ENCODE measurements at regions of chr9 and their contacts with region 1.

Region 1: DNA sequence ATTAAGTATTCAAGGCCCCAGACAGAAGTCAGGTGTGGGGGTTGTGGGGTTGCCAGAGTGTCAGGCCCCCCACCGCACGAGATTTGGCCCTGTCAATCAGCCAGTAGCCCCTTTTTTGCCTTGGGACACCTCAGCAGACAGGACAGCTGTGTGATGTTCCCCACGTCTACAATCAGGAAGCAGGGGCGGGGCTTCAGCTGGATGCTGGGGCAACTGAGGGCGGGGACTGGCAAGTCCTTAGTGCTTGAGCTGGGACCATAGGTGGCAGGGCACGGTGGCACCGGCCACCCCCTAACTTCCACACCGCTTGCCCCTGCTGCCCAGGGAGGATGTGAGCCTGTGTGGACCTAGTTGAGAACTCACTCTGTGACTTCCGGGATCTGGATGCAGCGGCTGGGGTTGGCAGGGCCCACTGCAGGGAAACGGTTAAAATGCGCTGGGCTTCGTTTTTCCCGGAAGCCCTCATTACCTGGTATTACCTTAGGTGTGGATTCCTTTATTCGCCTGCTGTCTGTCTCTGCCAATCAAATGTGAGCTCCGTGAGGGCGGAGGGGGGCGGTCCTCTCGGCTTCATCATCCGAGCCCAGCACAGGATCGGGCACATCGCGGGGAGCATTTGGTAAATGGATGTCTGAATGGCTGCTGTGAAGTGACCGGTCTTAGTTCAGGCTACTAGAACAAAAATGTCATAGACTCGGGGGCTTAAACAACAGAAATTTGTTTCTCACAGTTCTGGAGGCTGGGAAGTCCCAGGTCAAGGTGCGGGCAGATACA is 7.5 kb upstream of the GTF3C5 start:
- DNase-seq: no peak
- ATAC-seq: no peak
- H3K4me3 Mint-ChIP-seq: no peak overlapping the region
- H3K27ac Mint-ChIP-seq: no peak overlapping the region
- H3K4me1 Mint-ChIP-seq: peaks cover 7% of the 10 kb centered on the region
- H3K27me3 Mint-ChIP-seq: no peaks in the 10 kb centered on the region
- CTCF ChIP-seq: no peak

Region 2: DNA sequence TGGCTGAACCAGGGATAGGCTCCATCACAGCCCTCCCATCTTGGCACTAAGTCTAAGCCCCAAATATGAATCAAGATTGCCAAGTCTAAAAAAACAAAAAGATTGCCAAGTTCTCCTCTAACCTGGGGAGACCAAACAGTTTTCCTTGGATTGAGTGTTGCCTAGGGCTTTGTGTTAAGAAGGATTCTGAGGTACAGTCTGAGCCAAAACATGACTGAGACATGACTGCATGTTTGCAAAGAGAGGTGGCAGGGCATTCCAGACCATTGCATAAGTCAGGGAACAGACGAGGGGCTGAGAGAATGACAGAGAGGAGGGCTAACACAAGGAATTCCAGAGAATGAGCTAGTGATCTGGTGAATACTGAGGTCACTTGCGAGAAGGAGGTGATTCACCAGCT is 2002.9 kb before region 1 on chr9:
- CTCF ChIA-PET with region 1: no interaction called
- POLR2A ChIA-PET with region 1: no interaction called
- intact Hi-C with region 1: no loop called
- DNase-seq: no peak
- ATAC-seq: no peak
- H3K4me3 Mint-ChIP-seq: no peak overlapping the region
- H3K27ac Mint-ChIP-seq: no peak overlapping the region
- H3K4me1 Mint-ChIP-seq: no peaks in the 10 kb centered on the region
- H3K27me3 Mint-ChIP-seq: peaks cover 12% of the 10 kb centered on the region
- CTCF ChIP-seq: no peak

Region 3: GRCh38 chr9:132752877-132753592 is 270.3 kb before region 1 on chr9:
- CTCF ChIA-PET with region 1: no interaction called
- POLR2A ChIA-PET with region 1: no interaction called
- intact Hi-C with region 1: no loop called
- DNase-seq: no peak
- ATAC-seq: no peak
- H3K4me3 Mint-ChIP-seq: no peak overlapping the region
- H3K27ac Mint-ChIP-seq: no peak overlapping the region
- H3K4me1 Mint-ChIP-seq: no peaks in the 10 kb centered on the region
- H3K27me3 Mint-ChIP-seq: peaks cover 4% of the 10 kb centered on the region
- CTCF ChIP-seq: no peak

Region 4: GRCh38 chr9:132973713-132974112 is 49.6 kb before region 1 on chr9:
- CTCF ChIA-PET with region 1: interaction called, 5 read pairs
- POLR2A ChIA-PET with region 1: no interaction called
- intact Hi-C with region 1: loop called (anchors 2 kb)
- DNase-seq: no peak
- ATAC-seq: no peak
- H3K4me3 Mint-ChIP-seq: no peak overlapping the region
- H3K27ac Mint-ChIP-seq: no peak overlapping the region
- H3K4me1 Mint-ChIP-seq: peaks cover 13% of the 10 kb centered on the region
- H3K27me3 Mint-ChIP-seq: peaks cover 18% of the 10 kb centered on the region
- CTCF ChIP-seq: no peak

Region 5: GRCh38 chr9:133008824-133009223 is 14.5 kb before region 1 on chr9:
- CTCF ChIA-PET with region 1: interaction called, 15 read pairs
- POLR2A ChIA-PET with region 1: no interaction called
- intact Hi-C with region 1: no loop called
- DNase-seq: no peak
- ATAC-seq: no peak
- H3K4me3 Mint-ChIP-seq: no peak overlapping the region
- H3K27ac Mint-ChIP-seq: no peak overlapping the region
- H3K4me1 Mint-ChIP-seq: no peaks in the 10 kb centered on the region
- H3K27me3 Mint-ChIP-seq: peaks cover 25% of the 10 kb centered on the region
- CTCF ChIP-seq: no peak

Measured in activated B cell treated with CpG ODN at 0.5 μM for 24 hours (primary cell).